Tibial artery (tissue), 4 donors: ENCODE measurements at regions of chr9 and their contacts with region 1.

Region 1: GRCh38 chr9:96619491-96620154 is at the start of gene CDC14B:
- DNase-seq: peak; percentile 81 to 93
- H3K4me3 ChIP-seq: peak within 1 kb of the TSS; percentile 71 to 87
- H3K27ac ChIP-seq: peak within 1 kb of the TSS; percentile 86 to 88
- H3K4me1 ChIP-seq: peaks cover 0 to 7% (median 2%) of the 10 kb centered on the region in 4 donors
- H3K27me3 ChIP-seq: no peaks in the 10 kb centered on the region
- CTCF ChIP-seq: peak in 1 of 2 experiments; percentile 40

Region 2: GRCh38 chr9:96574931-96575351 is 44.7 kb before region 1 on chr9:
- intact Hi-C with region 1: loop called (anchors 5 kb)
- DNase-seq: no peak
- H3K4me3 ChIP-seq: no peak overlapping the region
- H3K27ac ChIP-seq: no peak overlapping the region
- H3K4me1 ChIP-seq: no peaks in the 10 kb centered on the region
- H3K27me3 ChIP-seq: no peaks in the 10 kb centered on the region
- CTCF ChIP-seq: no peak